SK-N-SH (cell line): ENCODE measurements at regions of chr9 and their contacts with region 1.

Region 1: DNA sequence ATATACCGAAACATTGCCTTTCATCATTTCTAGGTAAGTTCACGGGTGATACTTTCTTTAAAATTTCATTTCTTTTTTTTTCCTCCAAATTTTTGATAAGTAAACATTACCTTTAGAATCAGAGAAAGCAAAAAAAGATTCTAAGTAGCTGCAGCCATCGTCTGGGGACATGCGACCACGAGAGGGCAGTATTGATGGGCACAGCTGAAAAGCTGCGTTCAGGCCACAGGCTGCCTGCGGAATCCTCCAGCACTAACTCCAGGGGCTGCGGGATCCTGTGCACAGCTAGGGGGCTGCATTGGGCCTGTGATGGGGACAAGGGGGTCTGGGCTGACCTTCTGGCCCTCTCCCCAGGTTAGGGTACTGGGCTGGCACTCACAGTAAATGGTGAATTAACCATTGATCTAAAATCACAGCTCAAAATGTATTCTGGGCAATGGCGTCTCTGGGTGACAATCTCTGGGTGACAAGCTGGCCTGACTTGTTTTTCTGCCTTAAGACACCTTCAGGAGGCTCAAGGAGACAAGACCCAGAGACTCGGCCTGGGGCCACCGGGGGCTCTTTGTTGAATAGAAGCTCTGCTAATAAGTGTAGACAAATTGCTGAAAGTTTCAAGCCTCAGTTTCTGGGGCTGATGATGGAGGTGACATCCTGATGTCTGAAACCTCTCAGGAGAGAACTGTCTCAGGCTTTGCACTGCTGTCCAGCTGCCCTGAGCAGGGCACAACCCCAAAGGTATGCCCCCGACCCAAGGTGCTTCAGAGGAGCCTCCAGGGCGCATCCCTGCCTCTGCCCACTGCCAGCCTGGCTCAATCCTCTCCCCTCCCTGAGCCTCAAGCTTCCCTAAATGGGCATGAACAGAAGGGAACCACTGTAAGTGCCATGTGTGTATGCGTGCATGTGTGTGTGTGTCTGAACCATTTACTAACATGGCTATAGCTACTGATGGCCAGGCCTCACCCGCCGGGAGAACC is 44.3 kb upstream of the SARDH start:
- DNase-seq: peak; percentile 90
- H3K4me3 ChIP-seq: no peak overlapping the region; a peak in 1 of 4 replicates
- H3K27ac ChIP-seq: peak overlapping the region in 1 of 2 experiments; percentile 64; a peak in 2 of 4 replicates
- H3K4me1 ChIP-seq: peaks cover 0 to 23% of the 10 kb centered on the region in 2 experiments; a peak in 1 of 4 replicates
- H3K27me3 ChIP-seq: no peaks in the 10 kb centered on the region
- CTCF ChIP-seq: peak; percentile 89
- EP300 ChIP-seq: no peak
- RAD21 ChIP-seq: peak; percentile 83

Region 2: GRCh38 chr9:133750982-133751649 is 31.3 kb before region 1 on chr9:
- CTCF ChIA-PET with region 1: interaction called, 11 read pairs
- POLR2A ChIA-PET with region 1: no interaction called
- DNase-seq: no peak
- H3K4me3 ChIP-seq: no peak overlapping the region
- H3K27ac ChIP-seq: no peak overlapping the region
- H3K4me1 ChIP-seq: no peaks in the 10 kb centered on the region; a peak in 1 of 4 replicates
- H3K27me3 ChIP-seq: no peaks in the 10 kb centered on the region
- CTCF ChIP-seq: no peak
- EP300 ChIP-seq: no peak
- RAD21 ChIP-seq: no peak

Region 3: DNA sequence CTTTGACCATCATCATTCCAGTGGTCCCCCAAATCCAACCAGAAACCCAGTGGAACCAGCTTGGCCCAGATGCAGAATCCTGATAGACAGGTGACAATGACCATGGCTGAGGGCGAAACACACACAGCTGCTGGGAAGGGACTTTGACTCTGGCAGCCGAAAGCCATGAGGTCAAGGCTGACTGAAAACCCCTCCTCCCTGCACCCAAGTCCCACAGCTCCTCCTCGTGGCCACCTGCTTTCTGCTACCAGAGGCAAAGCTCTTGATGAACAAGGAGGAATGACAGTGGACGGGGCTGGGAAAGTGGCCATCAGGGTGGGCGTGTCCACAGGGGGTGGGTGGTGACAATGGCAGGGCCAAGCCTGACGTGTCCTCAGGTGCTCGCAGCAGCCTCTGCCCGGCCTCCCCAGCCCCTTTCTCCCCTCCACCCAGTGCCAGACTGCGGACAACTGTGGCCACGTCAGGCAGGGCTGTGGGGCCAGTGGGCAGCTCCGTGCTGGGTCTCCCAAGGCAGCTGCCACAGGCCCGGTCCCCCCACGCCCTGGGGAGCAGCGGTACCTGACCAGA is 13.5 kb before region 1 on chr9:
- CTCF ChIA-PET with region 1: interaction called, 46 read pairs
- POLR2A ChIA-PET with region 1: interaction called, 3 read pairs
- DNase-seq: no peak
- H3K4me3 ChIP-seq: no peak overlapping the region
- H3K27ac ChIP-seq: no peak overlapping the region
- H3K4me1 ChIP-seq: peaks cover 0 to 8% of the 10 kb centered on the region in 2 experiments; a peak in 1 of 4 replicates
- H3K27me3 ChIP-seq: no peaks in the 10 kb centered on the region
- CTCF ChIP-seq: no peak
- EP300 ChIP-seq: no peak
- RAD21 ChIP-seq: 0 out of 2 replicates have a peak, but pooled peaks have one; percentile 3

Region 4: DNA sequence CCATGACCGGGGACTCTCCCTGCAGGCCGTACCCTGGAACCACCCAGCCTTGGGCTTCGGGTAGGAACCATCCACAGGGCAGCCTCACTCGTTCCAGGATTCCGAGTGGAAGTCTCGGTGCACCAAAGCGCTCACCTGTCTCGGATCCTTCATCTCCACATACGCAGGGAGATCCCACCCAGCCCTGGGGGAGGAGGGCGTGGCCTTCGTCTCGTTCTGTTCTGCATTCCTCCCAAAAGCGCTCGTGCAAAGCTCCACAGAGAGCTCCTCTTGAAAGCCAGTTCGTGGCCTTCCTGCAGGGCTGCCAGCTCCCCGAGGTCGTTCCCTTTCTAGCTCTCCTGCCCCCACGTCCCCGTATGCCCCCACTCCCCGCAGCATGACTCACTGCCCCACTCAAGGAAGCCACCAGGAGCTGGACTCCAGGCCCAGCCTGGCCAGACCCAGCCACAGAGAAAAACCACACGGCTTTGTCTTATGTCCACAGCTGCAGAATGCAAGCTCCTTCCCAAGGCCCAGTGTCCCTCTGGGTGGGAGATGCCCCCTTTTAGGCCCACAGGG is 20.7 kb after region 1 on chr9:
- CTCF ChIA-PET with region 1: interaction called, 90 read pairs
- POLR2A ChIA-PET with region 1: interaction called, 3 read pairs
- DNase-seq: no peak
- H3K4me3 ChIP-seq: no peak overlapping the region
- H3K27ac ChIP-seq: no peak overlapping the region
- H3K4me1 ChIP-seq: peaks cover 0 to 3% of the 10 kb centered on the region in 2 experiments; a peak in 1 of 4 replicates
- H3K27me3 ChIP-seq: no peaks in the 10 kb centered on the region
- CTCF ChIP-seq: no peak
- EP300 ChIP-seq: no peak
- RAD21 ChIP-seq: no peak

Region 5: GRCh38 chr9:133869674-133870405 is 87.4 kb after region 1 on chr9:
- CTCF ChIA-PET with region 1: interaction called, 11 read pairs
- POLR2A ChIA-PET with region 1: no interaction called
- DNase-seq: peak; percentile 92
- H3K4me3 ChIP-seq: no peak overlapping the region
- H3K27ac ChIP-seq: peak overlapping the region; percentile 45 to 98; a peak in 3 of 4 replicates
- H3K4me1 ChIP-seq: peaks cover 26 to 75% of the 10 kb centered on the region in 2 experiments
- H3K27me3 ChIP-seq: no peaks in the 10 kb centered on the region
- CTCF ChIP-seq: no peak; the same call in 1 of the 2 replicates
- EP300 ChIP-seq: peak in 1 of 2 experiments; percentile 95; a peak in 2 of 4 replicates
- RAD21 ChIP-seq: peak; percentile 36

Region 6: GRCh38 chr9:134007150-134007549 is 224.7 kb after region 1 on chr9:
- CTCF ChIA-PET with region 1: interaction called, 15 read pairs
- POLR2A ChIA-PET with region 1: no interaction called
- DNase-seq: peak; percentile 84
- H3K4me3 ChIP-seq: no peak overlapping the region
- H3K27ac ChIP-seq: 0 out of 4 replicates have a peak overlapping the region, but pooled peaks of 1 of the 2 experiments have one; percentile 3
- H3K4me1 ChIP-seq: peaks cover 0 to 17% of the 10 kb centered on the region in 2 experiments; a peak in 1 of 4 replicates
- H3K27me3 ChIP-seq: no peaks in the 10 kb centered on the region
- CTCF ChIP-seq: no peak
- EP300 ChIP-seq: peak in 1 of 2 experiments; percentile 83; a peak in 2 of 4 replicates
- RAD21 ChIP-seq: no peak